Heart left ventricle (tissue), 16 donors: ENCODE measurements at regions of chr7 and their contacts with region 1.

Region 1: GRCh38 chr7:95684037-95684436 is 87.7 kb upstream of the PDK4 start:
- DNase-seq: no peak
- ATAC-seq: peak; percentile 23 to 72 (median 36)
- H3K4me3 ChIP-seq: peak overlapping the region in 1 of 12 donors; percentile 22
- H3K27ac ChIP-seq: peak overlapping the region in 1 of 12 donors; percentile 62
- H3K4me1 ChIP-seq: peaks cover 0 to 12% (median 0%) of the 10 kb centered on the region in 12 donors
- H3K27me3 ChIP-seq: no peaks in the 10 kb centered on the region
- CTCF ChIP-seq: peak; percentile 45 to 77 (median 60)
- POLR2A ChIP-seq: no peak

Region 2: GRCh38 chr7:95590387-95591248 is 93.4 kb before region 1 on chr7:
- intact Hi-C with region 1: loop called in 7 of 10 experiments (anchors 2 to 5 kb)
- DNase-seq: no peak
- ATAC-seq: peak in 3 of 4 donors; percentile 0 to 25 (median 17)
- H3K4me3 ChIP-seq: peak overlapping the region in 9 of 12 donors; percentile 8 to 98 (median 86)
- H3K27ac ChIP-seq: peak overlapping the region in 11 of 12 donors; percentile 4 to 99 (median 35)
- H3K4me1 ChIP-seq: peaks cover 0 to 85% (median 54%) of the 10 kb centered on the region in 12 donors
- H3K27me3 ChIP-seq: no peaks in the 10 kb centered on the region
- CTCF ChIP-seq: no peak
- POLR2A ChIP-seq: peak in 1 of 2 donors; percentile 71

Region 3: GRCh38 chr7:95596198-95597063 is 87.6 kb before region 1 on chr7 and contains the start of gene PDK4:
- intact Hi-C with region 1: loop called in 8 of 10 experiments (anchors 2 to 5 kb)
- DNase-seq: peak; percentile 92 to 97 (median 95)
- ATAC-seq: peak; percentile 83 to 96 (median 90)
- H3K4me3 ChIP-seq: peak within 1 kb of the TSS; percentile 70 to 98 (median 84)
- H3K27ac ChIP-seq: peak within 1 kb of the TSS; percentile 87 to 99 (median 96)
- H3K4me1 ChIP-seq: peaks cover 5 to 62% (median 40%) of the 10 kb centered on the region in 12 donors
- H3K27me3 ChIP-seq: no peaks in the 10 kb centered on the region
- CTCF ChIP-seq: no peak
- POLR2A ChIP-seq: peak; percentile 72 to 100
- total RNA-seq, gene PDK4: 45.6 to 4,362 (median 173) TPM

Region 4: GRCh38 chr7:95899919-95900513 is 216.0 kb after region 1 on chr7:
- intact Hi-C with region 1: no loop called
- DNase-seq: no peak
- ATAC-seq: no peak
- H3K4me3 ChIP-seq: no peak overlapping the region
- H3K27ac ChIP-seq: no peak overlapping the region
- H3K4me1 ChIP-seq: peaks cover 0 to 15% (median 2%) of the 10 kb centered on the region in 12 donors
- H3K27me3 ChIP-seq: no peaks in the 10 kb centered on the region
- CTCF ChIP-seq: no peak
- POLR2A ChIP-seq: no peak